Naive thymus-derived CD8-positive, alpha-beta T cell (primary cell): ENCODE measurements at regions of chr2 and their contacts with region 1.

Region 1: GRCh38 chr2:70142590-70143313 is 48.1 kb downstream of the C2orf42 start:
- DNase-seq: peak; percentile 95 to 100 (median 100)
- ATAC-seq: peak; percentile 78 to 81
- H3K4me3 Mint-ChIP-seq: peak overlapping the region; percentile 78 to 96 (median 91)
- H3K27ac Mint-ChIP-seq: peak overlapping the region; percentile 96 to 100 (median 98)
- H3K4me1 Mint-ChIP-seq: peaks cover 34 to 64% (median 59%) of the 10 kb centered on the region in 4 donors
- H3K27me3 Mint-ChIP-seq: peaks cover 0 to 3% (median 0%) of the 10 kb centered on the region in 5 donors

Region 2: DNA sequence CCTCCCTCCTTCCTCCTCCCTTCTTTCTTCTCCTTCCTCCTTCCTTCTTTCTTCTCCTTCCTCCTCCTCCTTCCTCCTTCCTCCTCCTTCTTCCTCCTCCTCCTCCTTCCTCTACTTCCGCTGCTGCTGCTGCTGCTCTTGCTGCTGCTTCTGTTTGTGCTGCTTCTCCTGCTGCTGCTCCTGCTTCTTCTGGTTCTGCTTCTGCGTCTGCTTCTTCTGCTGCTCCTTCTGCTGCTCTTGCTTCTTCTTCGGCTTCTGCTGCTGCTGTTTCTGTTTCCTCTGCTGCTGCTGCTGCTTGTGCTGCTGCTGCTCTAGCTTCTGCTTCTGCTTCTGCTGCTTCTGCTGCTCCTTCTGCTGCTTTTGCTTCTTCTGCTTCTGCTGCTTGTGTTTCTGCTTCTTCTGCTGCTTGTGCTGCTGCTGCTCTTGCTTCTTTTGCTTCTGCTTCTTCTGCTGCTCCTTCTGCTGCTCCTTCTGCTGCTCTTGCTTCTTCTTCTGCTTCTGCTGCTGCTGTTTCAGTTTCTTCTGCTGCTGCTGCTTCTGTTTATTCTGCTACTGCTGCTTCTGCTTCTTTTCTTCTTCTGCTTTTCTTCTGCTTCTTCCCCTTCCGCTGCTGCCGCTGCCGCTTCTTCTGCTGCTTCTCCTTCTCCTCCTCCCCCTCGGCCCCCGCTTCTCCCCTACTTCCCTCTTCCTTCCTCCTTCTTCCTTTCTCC is 240.4 kb before region 1 on chr2:
- POLR2A ChIA-PET with region 1: interaction called, 10 read pairs
- DNase-seq: peak in 7 of 10 donors; percentile 7 to 31 (median 20)
- ATAC-seq: peak; percentile 57 to 62
- H3K4me3 Mint-ChIP-seq: peak overlapping the region; percentile 69 to 96 (median 90)
- H3K27ac Mint-ChIP-seq: peak overlapping the region; percentile 76 to 97 (median 94)
- H3K4me1 Mint-ChIP-seq: peaks cover 30 to 65% (median 51%) of the 10 kb centered on the region in 4 donors
- H3K27me3 Mint-ChIP-seq: no peaks in the 10 kb centered on the region

Region 3: GRCh38 chr2:70086838-70087701 is 55.7 kb before region 1 on chr2 and contains the start of gene PCBP1:
- POLR2A ChIA-PET with region 1: interaction called, 1,727 read pairs
- DNase-seq: peak; percentile 89 to 99 (median 98)
- ATAC-seq: peak; percentile 36 to 61
- H3K4me3 Mint-ChIP-seq: peak within 1 kb of the TSS; percentile 93 to 99 (median 97)
- H3K27ac Mint-ChIP-seq: peak within 1 kb of the TSS; percentile 100
- H3K4me1 Mint-ChIP-seq: peaks cover 35 to 71% (median 65%) of the 10 kb centered on the region in 4 donors
- H3K27me3 Mint-ChIP-seq: peaks cover 0 to 4% (median 0%) of the 10 kb centered on the region in 5 donors
- polyA plus RNA-seq, gene PCBP1: 159 to 218 (median 195) TPM

Region 4: DNA sequence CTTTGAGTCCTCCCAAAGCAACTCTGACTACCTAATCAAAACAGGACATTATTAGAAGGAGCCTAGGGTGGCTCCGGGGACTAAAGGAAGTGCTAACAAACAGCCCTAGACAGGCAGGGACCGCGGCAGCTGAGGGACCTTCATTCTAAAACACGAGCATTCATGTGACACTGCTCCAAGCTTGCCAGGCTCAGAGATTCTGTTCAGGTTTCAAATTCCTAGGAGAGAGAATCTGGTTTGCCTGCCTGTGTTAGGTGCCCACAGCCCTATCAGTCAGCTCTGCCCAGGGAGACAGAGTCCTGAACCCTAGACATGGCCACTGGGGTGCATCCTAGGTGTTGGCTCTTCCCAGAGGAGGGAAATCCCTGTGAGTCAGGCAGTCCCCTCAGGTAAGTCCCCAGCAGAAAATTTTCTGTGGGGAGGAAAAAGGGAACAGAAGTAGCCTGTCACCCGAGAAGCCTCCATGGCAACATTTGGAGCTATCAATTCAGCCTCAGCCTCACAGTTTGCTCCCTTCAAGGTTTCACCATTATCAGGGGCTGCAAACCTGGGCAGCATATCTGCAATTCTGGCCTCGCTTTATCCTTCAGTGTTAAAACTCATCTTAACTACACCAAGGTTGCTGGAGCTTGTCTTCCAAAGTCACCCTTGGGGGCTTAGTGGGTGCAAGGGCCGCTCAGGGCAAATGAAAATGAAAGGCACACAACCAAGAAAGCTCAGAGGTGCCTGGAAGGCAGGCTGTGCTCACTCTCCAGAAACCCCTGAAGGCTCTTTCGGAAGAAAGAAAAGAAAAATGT is 26.9 kb before region 1 on chr2:
- POLR2A ChIA-PET with region 1: interaction called, 600 read pairs
- DNase-seq: no peak
- ATAC-seq: peak; percentile 53 to 55
- H3K4me3 Mint-ChIP-seq: peak overlapping the region; percentile 12 to 61 (median 29)
- H3K27ac Mint-ChIP-seq: peak overlapping the region in 8 of 10 donors; percentile 27 to 86 (median 63)
- H3K4me1 Mint-ChIP-seq: peaks cover 17 to 67% (median 58%) of the 10 kb centered on the region in 4 donors
- H3K27me3 Mint-ChIP-seq: no peaks in the 10 kb centered on the region

Region 5: DNA sequence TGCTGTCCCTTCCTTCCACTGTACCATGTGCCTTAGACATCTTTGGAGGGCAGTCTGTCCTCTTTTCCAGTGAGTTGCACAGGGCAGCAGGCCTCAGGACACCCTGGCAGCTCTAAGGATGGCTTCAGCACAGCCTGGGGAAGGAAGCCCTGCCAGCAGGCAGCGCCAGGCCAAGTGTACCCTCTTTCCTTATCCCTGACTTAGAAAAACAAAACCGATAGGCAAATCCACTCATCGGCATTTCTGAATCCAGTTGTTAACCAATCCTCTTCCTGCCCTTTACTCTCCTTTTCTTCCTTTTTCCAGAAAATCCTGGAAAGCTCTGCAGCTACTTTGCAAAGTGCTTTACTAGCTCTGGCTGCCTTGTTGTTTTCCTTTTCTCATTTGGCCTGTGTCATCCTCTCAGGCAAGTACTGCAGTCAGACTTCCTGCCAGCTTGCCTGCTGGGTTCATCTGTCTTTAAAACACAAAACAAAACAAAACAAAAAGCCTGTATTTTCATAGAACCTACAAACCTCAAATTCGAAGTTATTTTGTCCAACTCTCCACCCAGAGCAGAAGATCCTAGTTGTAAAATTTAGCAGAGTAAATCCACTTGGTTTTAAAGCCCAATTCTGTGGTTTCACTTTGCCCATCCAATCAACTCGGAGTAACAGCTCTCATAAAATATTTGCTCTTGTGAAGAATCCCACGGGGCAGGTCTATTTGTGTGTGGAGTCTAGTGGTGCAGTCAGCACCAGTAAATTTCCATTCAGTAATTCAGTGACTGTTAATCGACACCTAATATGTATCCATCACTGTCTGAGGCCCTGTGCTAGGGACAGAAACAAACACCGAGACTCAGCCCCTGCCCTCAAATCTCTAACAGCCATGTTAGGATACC is 10.3 kb before region 1 on chr2:
- POLR2A ChIA-PET with region 1: interaction called, 600 read pairs
- DNase-seq: peak in 6 of 10 donors; percentile 25 to 72 (median 56)
- ATAC-seq: peak; percentile 55 to 56
- H3K4me3 Mint-ChIP-seq: peak overlapping the region; percentile 83 to 90 (median 88)
- H3K27ac Mint-ChIP-seq: peak overlapping the region; percentile 92 to 100 (median 97)
- H3K4me1 Mint-ChIP-seq: peaks cover 40 to 87% (median 81%) of the 10 kb centered on the region in 4 donors
- H3K27me3 Mint-ChIP-seq: no peaks in the 10 kb centered on the region

Region 6: GRCh38 chr2:70241338-70241737 is 98.6 kb after region 1 on chr2:
- POLR2A ChIA-PET with region 1: no interaction called
- DNase-seq: no peak
- ATAC-seq: no peak
- H3K4me3 Mint-ChIP-seq: peak overlapping the region in 5 of 10 donors; percentile 7 to 52 (median 22)
- H3K27ac Mint-ChIP-seq: peak overlapping the region in 7 of 10 donors; percentile 2 to 72 (median 28)
- H3K4me1 Mint-ChIP-seq: peaks cover 20 to 60% (median 50%) of the 10 kb centered on the region in 4 donors
- H3K27me3 Mint-ChIP-seq: no peaks in the 10 kb centered on the region

Region 7: GRCh38 chr2:70258532-70258874 is 115.8 kb after region 1 on chr2:
- POLR2A ChIA-PET with region 1: interaction called, 11 read pairs
- DNase-seq: no peak
- ATAC-seq: no peak
- H3K4me3 Mint-ChIP-seq: peak overlapping the region; percentile 81 to 97 (median 90)
- H3K27ac Mint-ChIP-seq: peak overlapping the region; percentile 42 to 95 (median 84)
- H3K4me1 Mint-ChIP-seq: peaks cover 15 to 51% (median 38%) of the 10 kb centered on the region in 4 donors
- H3K27me3 Mint-ChIP-seq: no peaks in the 10 kb centered on the region

Region 8: GRCh38 chr2:70328921-70329561 is 186.3 kb after region 1 on chr2:
- POLR2A ChIA-PET with region 1: no interaction called
- DNase-seq: no peak
- ATAC-seq: no peak
- H3K4me3 Mint-ChIP-seq: no peak overlapping the region
- H3K27ac Mint-ChIP-seq: no peak overlapping the region
- H3K4me1 Mint-ChIP-seq: no peaks in the 10 kb centered on the region
- H3K27me3 Mint-ChIP-seq: peaks cover 0 to under 1% (median 0%) of the 10 kb centered on the region in 5 donors